ENCODE measurements at regions of chr6 and their contacts with region 1.

Region 1: GRCh38 chr6:149925974-149926777 is 3.3 kb upstream of the RAET1G start:
- DNase-seq: peak; percentile 76 to 89 (median 88)
- ATAC-seq: peak; percentile 95
- H3K4me3 ChIP-seq: peak overlapping the region; percentile 41 to 52
- H3K27ac ChIP-seq: peak overlapping the region; percentile 53 to 61
- H3K4me1 ChIP-seq: peaks cover 0 to 29% of the 10 kb centered on the region in 2 donors
- H3K27me3 ChIP-seq: peaks cover 13 to 90% of the 10 kb centered on the region in 2 donors
- CTCF ChIP-seq: peak; percentile 78 to 79

Region 2: GRCh38 chr6:149393002-149393679 is 533.0 kb before region 1 on chr6:
- intact Hi-C with region 1: no loop called
- DNase-seq: no peak
- ATAC-seq: no peak
- H3K4me3 ChIP-seq: no peak overlapping the region
- H3K27ac ChIP-seq: no peak overlapping the region
- H3K4me1 ChIP-seq: no peaks in the 10 kb centered on the region
- H3K27me3 ChIP-seq: no peaks in the 10 kb centered on the region
- CTCF ChIP-seq: no peak

Region 3: DNA sequence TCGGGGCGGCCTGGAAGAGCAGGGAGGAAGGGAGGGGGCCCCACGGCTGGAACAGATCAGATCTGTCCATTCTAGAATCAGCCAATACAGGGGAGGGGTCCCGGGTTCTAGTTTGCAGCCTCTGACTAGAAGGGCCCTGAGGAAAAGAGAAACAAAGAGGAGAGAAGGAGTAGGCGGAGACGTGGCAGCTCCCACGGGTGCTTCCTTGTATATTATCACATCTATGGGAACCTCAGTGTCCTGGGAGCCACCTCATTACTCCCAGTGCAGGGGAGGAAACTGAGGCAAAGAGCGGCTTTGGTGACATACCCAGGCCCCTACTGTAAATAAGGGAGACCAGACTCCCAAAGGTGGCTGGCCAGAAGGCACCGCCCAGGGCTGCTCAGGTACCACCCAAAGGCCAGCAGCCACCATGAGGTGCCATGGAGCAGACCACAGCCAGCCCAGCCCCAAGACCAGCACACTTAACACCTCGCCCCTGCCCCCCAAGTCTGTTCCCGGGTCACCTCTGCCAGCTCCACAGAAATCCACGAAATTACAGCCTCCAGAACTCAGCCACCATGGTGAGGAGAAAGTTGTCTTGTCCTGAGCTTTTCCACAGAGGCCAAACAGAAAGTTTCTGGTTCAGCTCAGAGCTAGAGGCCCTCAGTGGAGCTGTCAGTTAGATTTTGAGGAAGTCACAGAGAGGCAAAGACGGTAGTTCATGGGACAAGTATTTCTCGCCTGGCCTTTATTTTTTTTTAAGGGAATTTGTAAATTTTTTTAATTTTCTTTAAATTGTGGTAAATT is 443.4 kb before region 1 on chr6:
- intact Hi-C with region 1: no loop called
- DNase-seq: peak in 1 of 4 donors; percentile 36
- ATAC-seq: peak; percentile 37
- H3K4me3 ChIP-seq: peak overlapping the region in 1 of 2 donors; percentile 20
- H3K27ac ChIP-seq: peak overlapping the region; percentile 82 to 84
- H3K4me1 ChIP-seq: peaks cover 11 to 51% of the 10 kb centered on the region in 2 donors
- H3K27me3 ChIP-seq: no peaks in the 10 kb centered on the region
- CTCF ChIP-seq: no peak

Region 4: DNA sequence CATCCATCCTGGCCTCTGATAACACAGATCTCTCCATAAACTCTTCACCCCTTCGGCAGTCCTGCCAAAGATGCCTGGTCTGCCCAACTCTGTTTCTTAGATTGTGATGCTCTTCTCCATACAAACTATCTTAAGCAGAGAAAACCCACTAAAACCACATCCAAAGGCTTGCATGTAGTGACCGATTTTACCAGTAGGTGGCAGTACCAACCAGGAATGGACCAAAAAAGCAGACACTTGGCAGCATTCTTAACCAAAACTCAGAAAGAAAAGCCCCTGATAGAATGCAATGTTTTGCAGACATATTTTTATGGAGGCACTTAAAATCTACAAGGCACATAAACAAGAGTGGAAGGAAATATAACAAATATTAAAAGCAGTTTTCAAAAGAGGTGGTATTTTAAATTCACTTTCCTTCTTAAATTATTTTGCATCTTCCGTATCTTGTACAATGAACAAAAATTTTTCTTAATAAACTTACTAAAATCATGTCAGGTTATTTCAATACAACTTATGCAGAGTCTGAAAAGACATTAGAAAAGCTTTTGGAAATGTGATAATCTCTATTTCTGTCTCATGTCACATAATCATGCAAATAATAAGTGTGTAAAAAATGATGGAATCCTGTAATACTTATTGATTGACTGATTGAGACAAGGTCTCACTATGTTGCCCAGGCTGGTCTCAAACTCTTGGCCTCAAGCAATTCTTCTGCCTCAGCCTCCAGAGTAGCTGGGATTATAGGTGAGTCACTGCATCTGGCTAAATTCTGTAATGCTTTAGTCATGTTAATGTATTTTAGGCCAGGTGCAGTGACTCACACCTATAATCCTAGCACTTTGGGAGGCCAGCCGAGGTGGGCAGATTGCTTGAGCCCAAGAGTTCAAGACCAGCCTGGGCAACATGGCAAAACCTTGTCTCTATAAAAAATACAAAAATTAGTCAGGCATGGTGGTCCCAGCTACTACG is 91.4 kb before region 1 on chr6:
- intact Hi-C with region 1: loop called (anchors 5 to 10 kb)
- DNase-seq: peak in 2 of 4 donors; percentile 65 to 78
- ATAC-seq: peak; percentile 88
- H3K4me3 ChIP-seq: no peak overlapping the region
- H3K27ac ChIP-seq: no peak overlapping the region
- H3K4me1 ChIP-seq: no peaks in the 10 kb centered on the region
- H3K27me3 ChIP-seq: no peaks in the 10 kb centered on the region
- CTCF ChIP-seq: peak; percentile 84 to 90

Region 5: DNA sequence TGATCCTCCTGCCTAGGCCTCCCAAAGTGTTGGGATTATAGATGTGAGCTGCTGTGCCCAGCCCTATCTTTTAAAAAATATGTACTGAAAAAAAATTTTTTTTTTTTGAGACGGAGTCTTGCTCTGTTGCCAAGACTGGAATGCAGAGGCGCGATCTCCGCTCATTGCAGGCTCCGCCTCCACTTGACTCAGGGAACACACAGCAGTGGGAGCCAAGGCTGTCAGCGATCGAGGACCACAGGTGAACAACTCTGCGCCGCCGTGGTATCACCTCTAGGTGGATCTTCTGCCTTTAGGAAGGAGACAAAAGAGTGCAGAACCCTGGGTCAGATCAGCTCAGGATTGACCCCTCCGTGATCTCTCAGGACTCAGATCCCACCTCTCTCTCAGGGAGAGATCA is 42.0 kb before region 1 on chr6:
- intact Hi-C with region 1: no loop called
- DNase-seq: peak in 2 of 4 donors; percentile 61 to 69
- ATAC-seq: peak; percentile 95
- H3K4me3 ChIP-seq: no peak overlapping the region
- H3K27ac ChIP-seq: no peak overlapping the region
- H3K4me1 ChIP-seq: peaks cover 0 to 4% of the 10 kb centered on the region in 2 donors
- H3K27me3 ChIP-seq: no peaks in the 10 kb centered on the region
- CTCF ChIP-seq: no peak